ENCODE measurements at regions of chr15 and their contacts with region 1.

Region 1: DNA sequence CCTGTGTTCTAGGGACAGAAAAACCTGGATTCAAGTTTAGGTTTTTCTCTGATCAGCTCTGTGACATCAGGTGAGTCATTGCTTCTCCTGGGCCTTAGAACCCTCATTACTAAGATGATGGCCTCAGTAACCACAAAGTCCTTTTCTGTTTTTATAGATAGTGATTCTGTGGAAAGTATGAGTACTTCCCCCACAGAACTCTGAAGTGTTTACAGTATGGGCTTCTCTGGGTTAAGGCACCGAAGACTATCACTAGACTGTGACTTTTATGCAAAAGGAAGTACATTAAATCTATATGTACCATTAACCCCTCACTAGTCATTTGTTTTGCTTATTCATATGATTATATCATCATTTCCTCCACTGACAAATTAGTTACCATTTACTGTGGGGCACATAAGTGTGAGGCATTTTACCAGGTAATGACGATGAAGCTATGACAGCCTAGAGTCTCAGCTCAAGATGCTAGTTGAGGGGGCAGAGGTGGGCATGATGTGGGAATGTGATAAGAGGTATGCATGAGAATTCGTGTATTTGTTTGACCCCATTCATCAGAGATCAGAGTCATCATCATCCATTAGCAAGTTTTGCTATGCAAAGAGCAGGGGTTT is 15.0 kb upstream of the RORA start:
- DNase-seq: no peak
- ATAC-seq: no peak
- H3K4me3 ChIP-seq: no peak overlapping the region
- H3K4me3 Mint-ChIP-seq: no peak overlapping the region
- H3K27ac ChIP-seq: no peak overlapping the region
- H3K27ac Mint-ChIP-seq: no peak overlapping the region
- H3K4me1 ChIP-seq: no peaks in the 10 kb centered on the region
- H3K4me1 Mint-ChIP-seq: no peaks in the 10 kb centered on the region
- H3K27me3 ChIP-seq: peaks cover 6 to 12% of the 10 kb centered on the region in 2 experiments
- H3K27me3 Mint-ChIP-seq: peaks cover 65% of the 10 kb centered on the region
- CTCF ChIP-seq: no peak

Region 2: GRCh38 chr15:61309031-61309511 is 65.0 kb after region 1 on chr15:
- CTCF ChIA-PET with region 1: no interaction called
- POLR2A ChIA-PET with region 1: no interaction called
- intact Hi-C with region 1: loop called in 1 of 2 experiments (anchors 10 kb)
- DNase-seq: no peak
- ATAC-seq: no peak
- H3K4me3 ChIP-seq: no peak overlapping the region
- H3K4me3 Mint-ChIP-seq: no peak overlapping the region
- H3K27ac ChIP-seq: no peak overlapping the region
- H3K27ac Mint-ChIP-seq: no peak overlapping the region
- H3K4me1 ChIP-seq: no peaks in the 10 kb centered on the region
- H3K4me1 Mint-ChIP-seq: no peaks in the 10 kb centered on the region
- H3K27me3 ChIP-seq: no peaks in the 10 kb centered on the region
- H3K27me3 Mint-ChIP-seq: peaks cover 20% of the 10 kb centered on the region
- CTCF ChIP-seq: no peak

Region 3: GRCh38 chr15:61811952-61812351 is 567.9 kb after region 1 on chr15:
- CTCF ChIA-PET with region 1: no interaction called
- POLR2A ChIA-PET with region 1: no interaction called
- intact Hi-C with region 1: no loop called
- DNase-seq: no peak
- ATAC-seq: no peak
- H3K4me3 ChIP-seq: no peak overlapping the region
- H3K4me3 Mint-ChIP-seq: no peak overlapping the region
- H3K27ac ChIP-seq: no peak overlapping the region
- H3K27ac Mint-ChIP-seq: no peak overlapping the region
- H3K4me1 ChIP-seq: no peaks in the 10 kb centered on the region
- H3K4me1 Mint-ChIP-seq: no peaks in the 10 kb centered on the region
- H3K27me3 ChIP-seq: peaks cover under 1 to 4% of the 10 kb centered on the region in 2 experiments
- H3K27me3 Mint-ChIP-seq: peaks cover 43% of the 10 kb centered on the region
- CTCF ChIP-seq: no peak

Region 4: DNA sequence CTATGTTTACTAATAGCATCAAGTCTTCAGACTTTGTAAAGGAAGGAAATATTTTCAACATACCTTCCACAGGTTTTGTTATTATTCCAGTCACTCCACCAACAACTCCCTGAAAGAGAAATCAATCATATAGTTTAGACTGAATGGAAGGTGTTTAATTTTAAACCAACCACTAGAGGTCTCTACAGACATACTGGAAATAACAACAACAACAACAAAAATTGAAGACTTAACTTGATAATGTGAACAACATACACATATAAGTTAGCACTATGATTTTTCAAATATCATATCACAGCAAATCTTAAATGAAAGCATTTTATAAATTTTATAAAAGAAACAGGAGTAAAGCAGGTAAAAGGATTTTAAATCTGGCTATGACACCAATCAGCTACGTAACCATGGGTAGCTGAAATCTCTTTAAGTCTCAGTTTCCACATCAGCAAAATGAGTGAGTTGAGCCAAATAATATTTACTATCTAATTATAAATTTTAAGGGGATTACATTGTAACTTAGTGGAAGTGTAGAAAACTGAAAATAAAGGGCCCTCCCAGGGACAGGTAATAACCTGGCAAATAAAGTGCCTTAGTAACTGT is 627.9 kb after region 1 on chr15:
- CTCF ChIA-PET with region 1: no interaction called
- POLR2A ChIA-PET with region 1: no interaction called
- intact Hi-C with region 1: no loop called
- DNase-seq: peak in 3 of 14 experiments; percentile 11 to 39 (median 18)
- ATAC-seq: no peak
- H3K4me3 ChIP-seq: no peak overlapping the region
- H3K4me3 Mint-ChIP-seq: no peak overlapping the region
- H3K27ac ChIP-seq: no peak overlapping the region
- H3K27ac Mint-ChIP-seq: no peak overlapping the region
- H3K4me1 ChIP-seq: no peaks in the 10 kb centered on the region
- H3K4me1 Mint-ChIP-seq: no peaks in the 10 kb centered on the region
- H3K27me3 ChIP-seq: no peaks in the 10 kb centered on the region
- H3K27me3 Mint-ChIP-seq: no peaks in the 10 kb centered on the region
- CTCF ChIP-seq: peak; percentile 61